HCT116 (cell line): ENCODE measurements at regions of chr15 and their contacts with region 1.

Region 1: DNA sequence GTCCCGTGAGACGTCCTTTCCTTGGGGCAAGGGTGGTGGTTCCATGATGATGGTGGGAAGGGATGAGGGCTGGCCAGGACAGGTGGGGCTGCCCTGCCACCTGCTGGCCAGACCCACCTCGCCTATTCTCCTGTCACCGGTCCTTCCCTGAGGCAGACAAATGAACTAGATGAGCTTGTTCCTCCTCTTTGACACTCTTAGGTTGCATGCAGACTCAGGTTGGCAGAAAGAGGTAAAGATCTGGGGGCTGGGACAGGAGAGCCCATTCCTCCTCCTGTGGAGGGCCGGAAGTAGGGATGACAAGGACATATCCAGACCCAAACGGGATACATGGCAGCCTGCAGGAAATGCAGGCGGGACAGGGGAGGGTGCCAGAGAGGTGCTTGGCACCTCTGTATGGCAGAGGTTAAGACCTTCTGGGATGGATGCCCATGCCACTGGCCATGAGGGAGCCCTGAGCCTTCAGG is 38.6 kb downstream of the ACSBG1 start:
- DNase-seq: no peak
- ATAC-seq: peak; percentile 98
- H3K4me3 ChIP-seq: no peak overlapping the region
- H3K27ac ChIP-seq: no peak overlapping the region
- H3K4me1 ChIP-seq: no peaks in the 10 kb centered on the region
- H3K27me3 ChIP-seq: no peaks in the 10 kb centered on the region
- CTCF ChIP-seq: peak; percentile 75 to 90 (median 86)
- POLR2A ChIP-seq: no peak
- RAD21 ChIP-seq: peak; percentile 85

Region 2: GRCh38 chr15:78000091-78000926 is 195.5 kb before region 1 on chr15:
- CTCF ChIA-PET with region 1: interaction called, 3 read pairs
- POLR2A ChIA-PET with region 1: no interaction called
- RAD21 ChIA-PET with region 1: no interaction called
- intact Hi-C with region 1: loop called (anchors 1 kb)
- DNase-seq: peak; percentile 81
- ATAC-seq: peak; percentile 100
- H3K4me3 ChIP-seq: no peak overlapping the region
- H3K27ac ChIP-seq: no peak overlapping the region
- H3K4me1 ChIP-seq: peaks cover 0 to 5% of the 10 kb centered on the region in 2 experiments; a peak in 1 of 4 replicates
- H3K27me3 ChIP-seq: no peaks in the 10 kb centered on the region
- CTCF ChIP-seq: peak; percentile 84 to 94 (median 85)
- POLR2A ChIP-seq: no peak
- RAD21 ChIP-seq: peak; percentile 97

Region 3: GRCh38 chr15:78177447-78177873 is 18.3 kb before region 1 on chr15:
- CTCF ChIA-PET with region 1: interaction called, 27 read pairs
- POLR2A ChIA-PET with region 1: no interaction called
- RAD21 ChIA-PET with region 1: interaction called in 1 of 2 experiments, 4 read pairs
- intact Hi-C with region 1: no loop called
- DNase-seq: peak; percentile 13
- ATAC-seq: peak; percentile 90
- H3K4me3 ChIP-seq: no peak overlapping the region
- H3K27ac ChIP-seq: no peak overlapping the region
- H3K4me1 ChIP-seq: no peaks in the 10 kb centered on the region
- H3K27me3 ChIP-seq: no peaks in the 10 kb centered on the region
- CTCF ChIP-seq: peak; percentile 87 to 89 (median 89)
- POLR2A ChIP-seq: no peak
- RAD21 ChIP-seq: peak; percentile 94

Region 4: GRCh38 chr15:78212546-78213424 is 17.0 kb after region 1 on chr15:
- CTCF ChIA-PET with region 1: interaction called, 12 read pairs
- POLR2A ChIA-PET with region 1: no interaction called
- RAD21 ChIA-PET with region 1: no interaction called
- intact Hi-C with region 1: no loop called
- DNase-seq: peak; percentile 41
- ATAC-seq: peak; percentile 88
- H3K4me3 ChIP-seq: peak overlapping the region; percentile 17 to 28; a peak in 3 of 4 replicates
- H3K27ac ChIP-seq: peak overlapping the region; percentile 4; the same call in 1 of the 2 replicates
- H3K4me1 ChIP-seq: peaks cover 45 to 80% of the 10 kb centered on the region in 2 experiments
- H3K27me3 ChIP-seq: no peaks in the 10 kb centered on the region
- CTCF ChIP-seq: no peak
- POLR2A ChIP-seq: no peak
- RAD21 ChIP-seq: no peak